ENCODE measurements at regions of chr3 and their contacts with region 1.

Region 1: GRCh38 chr3:59998058-59998457 is 948.2 kb upstream of the CFAP20DC start:
- DNase-seq: no peak
- H3K4me3 Mint-ChIP-seq: no peak overlapping the region
- H3K27ac Mint-ChIP-seq: peak overlapping the region; percentile 8
- H3K4me1 Mint-ChIP-seq: peaks cover 90% of the 10 kb centered on the region
- H3K27me3 Mint-ChIP-seq: no peaks in the 10 kb centered on the region

Region 2: GRCh38 chr3:59843821-59844220 is 154.2 kb before region 1 on chr3:
- CTCF ChIA-PET with region 1: no interaction called
- intact Hi-C with region 1: no loop called
- DNase-seq: peak; percentile 19
- H3K4me3 Mint-ChIP-seq: no peak overlapping the region
- H3K27ac Mint-ChIP-seq: no peak overlapping the region
- H3K4me1 Mint-ChIP-seq: peaks cover 58% of the 10 kb centered on the region
- H3K27me3 Mint-ChIP-seq: no peaks in the 10 kb centered on the region

Region 3: GRCh38 chr3:60010781-60011180 is 12.7 kb after region 1 on chr3:
- CTCF ChIA-PET with region 1: interaction called, 6 read pairs
- intact Hi-C with region 1: loop called (anchors 1 kb)
- DNase-seq: peak; percentile 80
- H3K4me3 Mint-ChIP-seq: peak overlapping the region; percentile 75
- H3K27ac Mint-ChIP-seq: peak overlapping the region; percentile 97
- H3K4me1 Mint-ChIP-seq: peaks cover 87% of the 10 kb centered on the region
- H3K27me3 Mint-ChIP-seq: no peaks in the 10 kb centered on the region

Region 4: GRCh38 chr3:60431599-60431958 is 433.5 kb after region 1 on chr3:
- CTCF ChIA-PET with region 1: no interaction called
- intact Hi-C with region 1: loop called (anchors 10 kb)
- DNase-seq: peak; percentile 23
- H3K4me3 Mint-ChIP-seq: no peak overlapping the region
- H3K27ac Mint-ChIP-seq: no peak overlapping the region
- H3K4me1 Mint-ChIP-seq: peaks cover 25% of the 10 kb centered on the region
- H3K27me3 Mint-ChIP-seq: no peaks in the 10 kb centered on the region

Region 5: GRCh38 chr3:61251174-61251972 is 1253.3 kb after region 1 on chr3 and contains the start of gene FHIT:
- CTCF ChIA-PET with region 1: no interaction called
- intact Hi-C with region 1: loop called (anchors 5 kb)
- DNase-seq: peak; percentile 96
- H3K4me3 Mint-ChIP-seq: peak within 1 kb of the TSS; percentile 91
- H3K27ac Mint-ChIP-seq: peak within 1 kb of the TSS; percentile 87
- H3K4me1 Mint-ChIP-seq: peaks cover 11% of the 10 kb centered on the region
- H3K27me3 Mint-ChIP-seq: peaks cover under 1% of the 10 kb centered on the region
- total RNA-seq, gene FHIT: 20.2 to 22.7 TPM

Region 6: DNA sequence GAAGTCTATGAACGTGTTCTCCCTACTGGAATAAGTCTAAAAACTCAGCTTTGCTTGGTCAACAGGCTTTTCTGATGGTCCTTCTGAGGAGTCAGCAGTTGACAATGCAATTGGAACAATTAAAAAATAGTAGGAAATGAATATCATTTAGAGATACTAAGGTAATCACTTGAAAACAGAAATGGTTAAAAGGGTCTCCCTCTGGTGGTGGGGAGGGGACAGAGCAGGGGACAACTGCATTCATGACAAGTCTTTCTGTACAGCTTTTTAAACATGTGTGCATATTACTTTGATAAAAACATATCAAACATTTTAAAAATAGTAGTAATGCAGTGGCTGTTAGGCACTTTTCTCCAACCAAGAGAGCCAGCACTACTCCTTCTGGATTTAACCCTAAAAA is 1373.1 kb after region 1 on chr3:
- CTCF ChIA-PET with region 1: no interaction called
- intact Hi-C with region 1: loop called (anchors 10 kb)
- DNase-seq: peak; percentile 55
- H3K4me3 Mint-ChIP-seq: no peak overlapping the region
- H3K27ac Mint-ChIP-seq: no peak overlapping the region
- H3K4me1 Mint-ChIP-seq: no peaks in the 10 kb centered on the region
- H3K27me3 Mint-ChIP-seq: no peaks in the 10 kb centered on the region